Astrocyte of the cerebellum (primary cell): ENCODE measurements at regions of chr4 and their contacts with region 1.

Region 1: DNA sequence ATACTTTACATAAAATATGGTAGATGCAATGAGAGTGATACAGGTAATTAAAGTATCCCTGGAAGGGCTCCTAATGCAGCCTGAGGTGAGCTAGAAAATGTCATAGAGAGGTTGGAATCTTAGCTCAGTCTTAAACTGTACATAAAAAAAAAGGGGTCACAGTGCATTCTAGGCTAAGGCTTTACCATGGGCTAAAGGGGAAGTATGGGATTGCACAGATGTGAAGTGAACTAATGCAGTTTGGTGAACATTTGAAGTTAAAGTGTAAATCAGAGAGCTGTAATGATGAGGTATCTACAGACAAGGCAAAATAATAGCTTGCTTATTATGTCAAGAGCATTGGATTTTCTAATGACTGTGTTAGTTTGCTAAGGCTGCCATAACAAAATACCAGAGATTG is 405.9 kb downstream of the ADGRL3 start:
- DNase-seq: no peak
- H3K4me3 ChIP-seq: no peak overlapping the region
- CTCF ChIP-seq: no peak

Region 2: GRCh38 chr4:61571761-61572559 is 34.0 kb before region 1 on chr4:
- in situ Hi-C with region 1: loop called (anchors 5 kb)
- DNase-seq: peak; percentile 58
- H3K4me3 ChIP-seq: no peak overlapping the region
- CTCF ChIP-seq: no peak

Region 3: GRCh38 chr4:61657016-61657415 is 51.0 kb after region 1 on chr4:
- in situ Hi-C with region 1: no loop called
- DNase-seq: no peak
- H3K4me3 ChIP-seq: no peak overlapping the region
- CTCF ChIP-seq: no peak